ENCODE measurements at regions of chr9 and their contacts with region 1.

Region 1: GRCh38 chr9:68779558-68780384 is 74.7 kb downstream of the PIP5K1B start:
- DNase-seq: peak; percentile 90 to 96 (median 96)
- H3K4me3 ChIP-seq: peak overlapping the region; percentile 60 to 89 (median 63)
- H3K4me3 Mint-ChIP-seq: no peak overlapping the region
- H3K27ac ChIP-seq: peak overlapping the region; percentile 95 to 100
- H3K27ac Mint-ChIP-seq: no peak overlapping the region
- H3K4me1 ChIP-seq: peaks cover 37 to 46% of the 10 kb centered on the region in 2 donors
- H3K4me1 Mint-ChIP-seq: peaks cover 6% of the 10 kb centered on the region
- H3K27me3 ChIP-seq: no peaks in the 10 kb centered on the region
- H3K27me3 Mint-ChIP-seq: no peaks in the 10 kb centered on the region
- CTCF ChIP-seq: peak; percentile 18

Region 2: DNA sequence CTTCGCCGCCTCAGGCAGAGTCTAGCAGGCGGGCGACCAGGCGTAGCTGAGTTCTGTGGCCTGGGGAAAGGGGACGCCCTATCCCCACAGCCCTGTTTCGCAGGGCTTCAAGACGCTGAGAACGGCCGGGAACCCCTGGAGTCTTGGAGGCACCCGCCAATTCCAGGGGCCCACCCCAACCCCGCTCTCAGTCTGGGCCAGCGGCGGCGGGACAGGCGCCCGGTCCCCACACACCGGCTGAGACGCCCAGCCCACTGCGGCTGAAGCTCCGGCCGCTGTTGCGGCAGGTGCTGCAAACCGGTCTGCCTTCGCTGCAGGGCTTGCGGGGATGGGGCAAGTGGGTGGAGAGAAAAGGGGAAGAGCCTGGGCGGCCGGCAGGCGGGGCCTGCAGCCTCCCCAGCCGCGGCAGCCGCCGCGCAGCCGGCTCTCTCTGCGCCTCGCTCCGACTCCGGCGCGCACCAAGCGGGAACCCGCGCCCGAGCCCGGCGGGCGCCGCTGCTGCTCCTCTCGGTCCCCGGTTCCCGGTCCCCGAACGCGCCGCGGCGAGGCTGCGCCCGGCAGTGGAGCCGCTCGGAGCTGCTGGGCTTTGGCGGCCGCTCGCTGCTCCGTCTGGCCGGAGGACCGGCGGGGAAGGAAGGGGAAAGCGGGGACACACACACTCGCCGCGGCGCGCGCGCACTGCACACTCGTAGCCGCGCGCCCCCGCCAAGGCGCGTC is 74.8 kb before region 1 on chr9 and contains the start of gene PIP5K1B:
- intact Hi-C with region 1: loop called in 1 of 2 experiments (anchors 10 kb)
- DNase-seq: peak; percentile 74 to 78 (median 77)
- H3K4me3 ChIP-seq: peak within 1 kb of the TSS; percentile 73 to 94 (median 90)
- H3K4me3 Mint-ChIP-seq: peak within 1 kb of the TSS; percentile 94 to 96
- H3K27ac ChIP-seq: peak within 1 kb of the TSS in 1 of 2 donors; percentile 62
- H3K27ac Mint-ChIP-seq: peak within 1 kb of the TSS in 6 of 7 donors; percentile 53 to 91 (median 74)
- H3K4me1 ChIP-seq: peaks cover 23 to 34% of the 10 kb centered on the region in 2 donors
- H3K4me1 Mint-ChIP-seq: peaks cover 39% of the 10 kb centered on the region
- H3K27me3 ChIP-seq: peaks cover 13 to 19% of the 10 kb centered on the region in 2 donors
- H3K27me3 Mint-ChIP-seq: peaks cover 29 to 36% (median 34%) of the 10 kb centered on the region in 3 donors
- CTCF ChIP-seq: no peak
- polyA plus RNA-seq, gene PIP5K1B: 0.18 to 4.1 (median 0.87) TPM

Measured in CD14-positive monocyte (primary cell).